CD4-positive, alpha-beta T cell (primary cell): ENCODE measurements at regions of chr2 and their contacts with region 1.

Region 1: DNA sequence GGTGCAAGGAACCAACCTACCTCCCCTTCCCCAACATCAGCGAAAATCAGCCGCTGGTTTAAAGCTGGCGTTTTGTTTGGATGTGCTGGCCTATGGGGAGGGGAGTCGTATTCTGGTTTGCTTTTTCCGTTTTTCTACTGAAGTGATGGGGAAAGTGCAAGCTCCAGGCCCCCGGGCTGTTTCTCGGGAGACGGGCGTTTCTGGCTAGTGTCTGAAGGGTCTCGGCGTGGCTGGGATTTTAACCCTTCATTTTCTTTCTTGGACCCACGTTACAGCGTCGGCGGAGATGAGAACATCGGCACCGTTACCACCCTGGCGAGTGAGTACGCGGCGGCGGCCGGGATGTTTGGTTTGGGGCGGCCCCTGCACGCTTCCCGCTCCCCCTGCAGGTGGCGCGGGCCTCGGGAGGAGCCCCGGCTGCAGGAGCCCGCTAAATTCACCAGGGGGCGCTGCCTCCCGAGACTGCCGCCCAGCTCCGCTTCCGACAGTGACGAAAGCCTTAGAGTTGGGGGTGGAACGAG is 70.7 kb downstream of the PLB1 start:
- DNase-seq: peak; percentile 77 to 95 (median 88)
- ATAC-seq: peak; percentile 97
- H3K4me3 ChIP-seq: peak overlapping the region; percentile 68
- H3K4me3 Mint-ChIP-seq: peak overlapping the region; percentile 95
- H3K27ac ChIP-seq: peak overlapping the region in 1 of 2 donors; percentile 3
- H3K27ac Mint-ChIP-seq: peak overlapping the region; percentile 86
- H3K4me1 ChIP-seq: peaks cover 19% of the 10 kb centered on the region
- H3K4me1 Mint-ChIP-seq: peaks cover 20% of the 10 kb centered on the region
- H3K27me3 ChIP-seq: no peaks in the 10 kb centered on the region
- H3K27me3 Mint-ChIP-seq: no peaks in the 10 kb centered on the region
- CTCF ChIP-seq: peak; percentile 100

Region 2: GRCh38 chr2:28356095-28356911 is 210.3 kb before region 1 on chr2:
- CTCF ChIA-PET with region 1: no interaction called
- POLR2A ChIA-PET with region 1: no interaction called
- intact Hi-C with region 1: no loop called
- DNase-seq: peak in 6 of 14 experiments; percentile 28 to 79 (median 51)
- ATAC-seq: peak; percentile 7
- H3K4me3 ChIP-seq: no peak overlapping the region
- H3K4me3 Mint-ChIP-seq: no peak overlapping the region
- H3K27ac ChIP-seq: no peak overlapping the region
- H3K27ac Mint-ChIP-seq: no peak overlapping the region
- H3K4me1 ChIP-seq: peaks cover 52% of the 10 kb centered on the region
- H3K4me1 Mint-ChIP-seq: peaks cover 31% of the 10 kb centered on the region
- H3K27me3 ChIP-seq: no peaks in the 10 kb centered on the region
- H3K27me3 Mint-ChIP-seq: peaks cover 4% of the 10 kb centered on the region
- CTCF ChIP-seq: no peak

Region 3: DNA sequence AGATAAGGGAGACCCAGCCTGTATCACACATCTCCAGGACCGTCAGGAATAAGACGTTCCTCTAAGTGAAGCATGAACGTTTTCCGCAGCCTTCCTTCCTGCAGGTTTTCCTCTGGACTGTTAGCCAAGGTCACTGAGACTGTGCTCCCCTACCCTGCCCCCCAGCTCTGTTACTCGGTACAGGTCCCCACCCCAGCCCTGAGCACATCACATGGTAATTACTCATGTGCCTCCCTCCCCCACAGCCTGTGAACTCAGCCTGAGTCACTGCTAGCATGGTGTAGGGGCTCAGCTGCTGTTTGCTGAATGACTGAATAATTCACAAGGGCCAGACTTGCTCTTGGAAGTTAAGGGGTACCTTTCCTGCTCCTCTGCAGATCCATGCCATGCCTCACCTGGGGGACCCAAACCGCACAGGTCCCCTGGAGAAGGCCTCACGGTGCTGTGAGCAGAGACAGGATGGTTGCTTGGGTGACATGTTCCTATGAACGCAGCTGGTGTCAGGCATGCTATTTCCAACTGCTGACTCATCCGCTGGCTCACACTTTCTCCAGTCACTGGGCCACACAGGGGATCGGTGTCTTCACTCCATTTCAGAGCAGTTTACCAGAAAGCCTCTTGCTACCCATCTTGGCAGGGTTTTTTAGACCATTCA is 17.4 kb after region 1 on chr2:
- CTCF ChIA-PET with region 1: interaction called, 13 read pairs
- POLR2A ChIA-PET with region 1: interaction called, 10 read pairs
- intact Hi-C with region 1: no loop called
- DNase-seq: peak in 9 of 14 experiments; percentile 17 to 69 (median 33)
- ATAC-seq: no peak
- H3K4me3 ChIP-seq: no peak overlapping the region
- H3K4me3 Mint-ChIP-seq: no peak overlapping the region
- H3K27ac ChIP-seq: no peak overlapping the region
- H3K27ac Mint-ChIP-seq: no peak overlapping the region
- H3K4me1 ChIP-seq: peaks cover 28% of the 10 kb centered on the region
- H3K4me1 Mint-ChIP-seq: peaks cover 25% of the 10 kb centered on the region
- H3K27me3 ChIP-seq: no peaks in the 10 kb centered on the region
- H3K27me3 Mint-ChIP-seq: no peaks in the 10 kb centered on the region
- CTCF ChIP-seq: no peak

Region 4: GRCh38 chr2:28621172-28622100 is 54.9 kb after region 1 on chr2:
- CTCF ChIA-PET with region 1: interaction called, 14 read pairs
- POLR2A ChIA-PET with region 1: no interaction called
- intact Hi-C with region 1: no loop called
- DNase-seq: peak; percentile 55 to 96 (median 69)
- ATAC-seq: peak; percentile 86
- H3K4me3 ChIP-seq: peak overlapping the region; percentile 15
- H3K4me3 Mint-ChIP-seq: peak overlapping the region; percentile 76
- H3K27ac ChIP-seq: peak overlapping the region; percentile 93 to 98
- H3K27ac Mint-ChIP-seq: no peak overlapping the region
- H3K4me1 ChIP-seq: peaks cover 95% of the 10 kb centered on the region
- H3K4me1 Mint-ChIP-seq: peaks cover 86% of the 10 kb centered on the region
- H3K27me3 ChIP-seq: no peaks in the 10 kb centered on the region
- H3K27me3 Mint-ChIP-seq: no peaks in the 10 kb centered on the region
- CTCF ChIP-seq: no peak

Region 5: DNA sequence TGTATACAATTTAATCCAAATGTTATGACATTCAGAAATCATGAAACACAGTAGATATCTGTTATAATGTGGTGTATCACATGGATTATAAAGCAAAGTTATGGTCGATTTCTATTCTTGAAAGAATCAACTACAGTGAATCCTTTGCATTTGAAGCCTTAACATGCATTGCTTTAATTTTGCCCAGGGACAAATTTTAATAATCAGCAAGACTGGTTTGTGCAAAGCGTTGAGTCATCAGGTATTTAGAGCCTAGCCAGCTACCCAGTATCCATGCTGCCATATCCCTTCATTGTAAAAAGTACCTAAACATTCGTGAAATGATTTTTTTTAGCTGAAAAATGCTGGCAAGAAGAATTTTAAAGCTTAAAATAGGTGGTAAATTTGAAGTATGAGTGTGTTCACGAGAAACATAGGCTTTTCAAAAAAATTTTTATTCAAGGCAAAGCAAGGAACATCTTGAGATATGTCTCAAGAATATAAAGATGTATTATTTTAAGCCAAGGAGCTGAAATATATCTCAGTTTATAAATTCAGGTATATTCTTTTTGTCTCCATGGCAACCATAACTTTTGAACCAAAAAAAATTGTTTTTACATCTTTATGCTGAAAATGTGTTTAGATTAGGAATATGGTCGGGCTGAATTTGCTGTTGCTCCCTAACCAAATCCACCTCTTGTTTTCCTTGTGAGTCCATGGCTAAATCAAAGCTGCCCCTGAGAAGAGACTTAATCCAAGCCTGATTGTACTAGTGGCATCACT is 235.3 kb after region 1 on chr2:
- CTCF ChIA-PET with region 1: interaction called, 13 read pairs
- POLR2A ChIA-PET with region 1: no interaction called
- intact Hi-C with region 1: no loop called
- DNase-seq: no peak
- ATAC-seq: no peak
- H3K4me3 ChIP-seq: no peak overlapping the region
- H3K4me3 Mint-ChIP-seq: no peak overlapping the region
- H3K27ac ChIP-seq: no peak overlapping the region
- H3K27ac Mint-ChIP-seq: no peak overlapping the region
- H3K4me1 ChIP-seq: no peaks in the 10 kb centered on the region
- H3K4me1 Mint-ChIP-seq: peaks cover 10% of the 10 kb centered on the region
- H3K27me3 ChIP-seq: no peaks in the 10 kb centered on the region
- H3K27me3 Mint-ChIP-seq: no peaks in the 10 kb centered on the region
- CTCF ChIP-seq: no peak

Region 6: GRCh38 chr2:28870146-28870891 is 303.7 kb after region 1 on chr2 and contains the start of gene TRMT61B:
- CTCF ChIA-PET with region 1: interaction called, 7 read pairs
- POLR2A ChIA-PET with region 1: interaction called, 8 read pairs
- intact Hi-C with region 1: loop called in 1 of 2 experiments (anchors 5 kb)
- DNase-seq: peak; percentile 92 to 99 (median 97)
- ATAC-seq: peak; percentile 92
- H3K4me3 ChIP-seq: peak within 1 kb of the TSS; percentile 88
- H3K4me3 Mint-ChIP-seq: peak within 1 kb of the TSS; percentile 99
- H3K27ac ChIP-seq: peak within 1 kb of the TSS; percentile 82 to 93
- H3K27ac Mint-ChIP-seq: peak within 1 kb of the TSS; percentile 99
- H3K4me1 ChIP-seq: peaks cover 41% of the 10 kb centered on the region
- H3K4me1 Mint-ChIP-seq: peaks cover 37% of the 10 kb centered on the region
- H3K27me3 ChIP-seq: no peaks in the 10 kb centered on the region
- H3K27me3 Mint-ChIP-seq: peaks cover 7% of the 10 kb centered on the region
- CTCF ChIP-seq: no peak
- total RNA-seq, gene TRMT61B: 18.7 to 20.8 TPM

Region 7: GRCh38 chr2:28958689-28959088 is 392.1 kb after region 1 on chr2:
- CTCF ChIA-PET with region 1: no interaction called
- POLR2A ChIA-PET with region 1: no interaction called
- intact Hi-C with region 1: loop called (anchors 5 to 10 kb)
- DNase-seq: peak in 11 of 14 experiments; percentile 4 to 76 (median 15)
- ATAC-seq: peak; percentile 82
- H3K4me3 ChIP-seq: no peak overlapping the region
- H3K4me3 Mint-ChIP-seq: no peak overlapping the region
- H3K27ac ChIP-seq: no peak overlapping the region
- H3K27ac Mint-ChIP-seq: no peak overlapping the region
- H3K4me1 ChIP-seq: peaks cover 9% of the 10 kb centered on the region
- H3K4me1 Mint-ChIP-seq: peaks cover 4% of the 10 kb centered on the region
- H3K27me3 ChIP-seq: no peaks in the 10 kb centered on the region
- H3K27me3 Mint-ChIP-seq: no peaks in the 10 kb centered on the region
- CTCF ChIP-seq: peak; percentile 82